Mammary epithelial cell (primary cell): ENCODE measurements at regions of chr10 and their contacts with region 1.

Region 1: GRCh38 chr10:70363971-70364771 is 18.3 kb downstream of the LRRC20 start:
- DNase-seq: peak; percentile 95
- H3K4me3 ChIP-seq: peak overlapping the region in 1 of 3 experiments; percentile 21
- H3K27ac ChIP-seq: peak overlapping the region; percentile 75
- H3K4me1 ChIP-seq: peaks cover 14% of the 10 kb centered on the region
- H3K27me3 ChIP-seq: no peaks in the 10 kb centered on the region
- CTCF ChIP-seq: peak; percentile 66 to 94

Region 2: GRCh38 chr10:69428165-69428564 is 936.0 kb before region 1 on chr10:
- CTCF ChIA-PET with region 1: no interaction called
- dilution Hi-C with region 1: no loop called
- in situ Hi-C with region 1: no loop called
- intact Hi-C with region 1: no loop called
- DNase-seq: no peak
- H3K4me3 ChIP-seq: no peak overlapping the region
- H3K27ac ChIP-seq: no peak overlapping the region
- H3K4me1 ChIP-seq: peaks cover 14% of the 10 kb centered on the region
- H3K27me3 ChIP-seq: no peaks in the 10 kb centered on the region
- CTCF ChIP-seq: no peak

Region 3: GRCh38 chr10:69786791-69787190 is 577.4 kb before region 1 on chr10:
- CTCF ChIA-PET with region 1: no interaction called
- dilution Hi-C with region 1: no loop called
- in situ Hi-C with region 1: no loop called
- intact Hi-C with region 1: loop called (anchors 10 kb)
- DNase-seq: peak; percentile 35
- H3K4me3 ChIP-seq: no peak overlapping the region
- H3K27ac ChIP-seq: no peak overlapping the region
- H3K4me1 ChIP-seq: no peaks in the 10 kb centered on the region
- H3K27me3 ChIP-seq: no peaks in the 10 kb centered on the region
- CTCF ChIP-seq: peak; percentile 35 to 47

Region 4: GRCh38 chr10:70115948-70116682 is 248.1 kb before region 1 on chr10:
- CTCF ChIA-PET with region 1: no interaction called
- dilution Hi-C with region 1: no loop called
- in situ Hi-C with region 1: no loop called
- intact Hi-C with region 1: loop called (anchors 1 kb)
- DNase-seq: peak; percentile 25
- H3K4me3 ChIP-seq: no peak overlapping the region
- H3K27ac ChIP-seq: no peak overlapping the region
- H3K4me1 ChIP-seq: no peaks in the 10 kb centered on the region
- H3K27me3 ChIP-seq: no peaks in the 10 kb centered on the region
- CTCF ChIP-seq: peak; percentile 83 to 84

Region 5: DNA sequence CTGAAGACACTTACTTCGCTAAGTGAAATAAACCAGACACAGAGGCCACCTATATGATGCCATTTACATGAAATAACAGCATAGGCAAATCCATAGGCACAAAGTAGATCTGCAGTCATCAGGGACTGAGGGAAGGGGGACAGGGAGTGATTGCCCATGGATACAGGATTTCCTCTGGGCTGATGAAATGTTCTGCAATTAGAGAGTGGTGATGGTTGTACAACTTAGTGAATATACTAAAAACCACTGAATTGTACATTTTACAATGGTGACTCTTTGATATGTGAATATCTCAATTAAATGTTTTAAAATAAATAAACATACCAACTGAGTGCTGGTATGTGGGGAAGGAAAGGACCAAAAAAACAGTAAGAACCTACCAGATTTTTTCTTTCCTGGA is 151.3 kb before region 1 on chr10:
- CTCF ChIA-PET with region 1: no interaction called
- dilution Hi-C with region 1: no loop called
- in situ Hi-C with region 1: loop called in 1 of 2 experiments (anchors 10 kb)
- intact Hi-C with region 1: no loop called
- DNase-seq: no peak
- H3K4me3 ChIP-seq: no peak overlapping the region
- H3K27ac ChIP-seq: no peak overlapping the region
- H3K4me1 ChIP-seq: no peaks in the 10 kb centered on the region
- H3K27me3 ChIP-seq: no peaks in the 10 kb centered on the region
- CTCF ChIP-seq: no peak

Region 6: DNA sequence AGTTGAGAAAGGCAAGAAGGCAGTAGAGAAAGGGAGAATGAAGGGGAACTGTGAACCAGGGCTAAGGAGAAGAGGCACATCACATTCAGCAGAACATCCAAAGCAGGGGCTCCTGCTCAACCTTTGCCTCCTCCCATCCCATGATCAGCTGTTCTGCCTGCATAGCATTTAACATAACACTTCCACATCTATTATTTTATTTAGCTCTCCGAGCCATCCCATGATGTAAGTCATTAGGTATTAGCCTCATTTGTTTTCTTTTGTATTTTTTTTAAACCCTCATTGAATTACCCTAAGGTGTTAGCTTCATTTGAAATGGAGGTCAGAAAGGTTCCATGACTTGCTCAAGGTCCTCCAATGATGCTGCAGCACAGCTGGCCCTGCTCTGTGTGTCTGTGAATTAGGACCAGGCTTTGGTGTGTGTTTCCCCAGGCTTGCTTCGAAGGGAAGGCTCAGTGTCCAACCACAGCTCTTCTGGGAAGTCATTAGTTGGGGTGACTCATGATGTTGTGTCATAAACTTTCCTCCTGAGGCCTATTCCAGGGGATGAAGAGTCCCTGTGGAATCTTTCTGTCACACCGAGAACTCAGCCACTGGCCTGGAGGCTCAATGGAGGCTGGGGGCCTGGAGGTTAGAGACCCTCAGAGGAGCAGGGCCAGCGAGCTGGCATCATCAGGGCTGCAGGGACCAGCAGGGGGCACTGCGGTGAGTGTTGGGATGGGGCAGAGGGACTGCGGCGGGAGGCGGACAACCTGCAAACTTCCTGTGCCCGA is 96.8 kb before region 1 on chr10:
- CTCF ChIA-PET with region 1: interaction called, 9 read pairs
- dilution Hi-C with region 1: no loop called
- in situ Hi-C with region 1: no loop called
- intact Hi-C with region 1: loop called (anchors 1 kb)
- DNase-seq: peak; percentile 97
- H3K4me3 ChIP-seq: no peak overlapping the region
- H3K27ac ChIP-seq: peak overlapping the region; percentile 53
- H3K4me1 ChIP-seq: peaks cover 26% of the 10 kb centered on the region
- H3K27me3 ChIP-seq: no peaks in the 10 kb centered on the region
- CTCF ChIP-seq: peak in 1 of 2 donors; percentile 12

Region 7: DNA sequence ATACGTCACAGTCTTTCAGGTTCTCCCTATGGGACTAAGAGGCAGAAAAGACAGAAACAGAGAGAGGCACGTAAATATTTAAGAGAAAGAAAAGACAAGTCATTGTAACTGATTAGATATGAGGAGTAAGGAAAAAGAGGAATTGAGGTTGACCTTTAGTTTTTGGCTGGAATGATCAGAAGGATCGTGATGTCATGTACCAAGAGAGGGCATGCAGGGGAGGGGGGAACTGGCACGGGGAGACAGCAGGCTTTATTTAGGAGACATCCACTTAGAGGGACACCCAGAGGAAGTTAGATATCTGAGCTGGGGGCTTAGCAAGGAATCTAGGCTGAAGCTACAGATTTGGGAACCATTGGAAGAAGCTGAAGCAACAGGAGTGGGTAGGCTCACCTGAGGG is 27.5 kb after region 1 on chr10:
- CTCF ChIA-PET with region 1: no interaction called
- dilution Hi-C with region 1: no loop called
- in situ Hi-C with region 1: no loop called
- intact Hi-C with region 1: loop called (anchors 1 kb)
- DNase-seq: no peak
- H3K4me3 ChIP-seq: no peak overlapping the region
- H3K27ac ChIP-seq: no peak overlapping the region
- H3K4me1 ChIP-seq: peaks cover 6% of the 10 kb centered on the region
- H3K27me3 ChIP-seq: no peaks in the 10 kb centered on the region
- CTCF ChIP-seq: no peak